Left lung (tissue), 14 donors: ENCODE measurements at regions of chr6 and their contacts with region 1.

Region 1: GRCh38 chr6:108541838-108542759 is 18.6 kb upstream of the FOXO3 start:
- DNase-seq: peak in 3 of 4 donors; percentile 67 to 88 (median 79)
- ATAC-seq: peak; percentile 97
- H3K4me3 ChIP-seq: no peak overlapping the region
- H3K27ac ChIP-seq: no peak overlapping the region
- H3K4me1 ChIP-seq: peaks cover 0 to 5% of the 10 kb centered on the region in 2 donors
- H3K27me3 ChIP-seq: no peaks in the 10 kb centered on the region
- CTCF ChIP-seq: peak; percentile 77

Region 2: DNA sequence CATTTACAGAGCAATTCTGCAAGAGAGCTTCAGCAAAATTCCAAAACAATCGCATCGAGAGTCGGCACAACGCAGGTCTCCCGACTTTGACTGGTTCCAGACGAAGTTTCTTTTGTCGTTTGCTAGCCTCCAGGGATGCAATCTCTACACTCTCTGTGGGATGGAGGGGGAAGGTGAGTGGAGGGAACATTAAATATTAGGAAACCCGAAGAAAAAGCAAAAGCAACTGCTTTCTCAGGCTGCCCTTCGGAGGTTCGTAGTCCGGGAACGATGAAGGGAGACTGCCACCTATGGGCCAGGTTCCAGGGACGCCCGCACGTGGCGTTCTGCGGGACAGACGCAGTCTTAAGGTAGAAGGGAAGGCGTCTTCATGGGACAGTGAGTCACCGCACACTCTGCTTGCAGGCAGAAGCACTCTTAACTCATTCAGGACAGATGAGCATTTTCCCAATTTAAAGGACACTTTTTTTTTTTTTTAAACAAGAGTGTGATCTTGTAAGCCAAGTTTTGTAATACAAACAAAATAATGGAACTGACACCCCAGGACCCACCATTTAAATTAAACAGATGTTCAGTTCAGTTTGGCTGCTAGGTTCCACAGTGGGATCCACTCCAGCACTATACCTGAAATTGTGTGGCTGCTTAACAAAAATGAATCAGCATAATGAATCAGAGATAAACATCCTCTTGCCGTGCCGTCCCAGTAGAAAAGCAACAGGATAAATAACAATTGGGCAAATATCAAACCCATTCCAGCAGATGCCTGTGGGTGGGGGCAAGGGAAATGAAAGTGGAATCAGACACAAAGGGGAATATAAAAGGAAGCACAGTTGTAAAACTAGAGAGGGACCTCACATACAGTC is 240.3 kb after region 1 on chr6:
- intact Hi-C with region 1: loop called in 1 of 2 experiments (anchors 5 kb)
- DNase-seq: peak; percentile 79 to 94 (median 88)
- ATAC-seq: peak; percentile 99
- H3K4me3 ChIP-seq: peak overlapping the region; percentile 37 to 39
- H3K27ac ChIP-seq: peak overlapping the region in 1 of 2 donors; percentile 57
- H3K4me1 ChIP-seq: peaks cover 0 to 18% of the 10 kb centered on the region in 2 donors
- H3K27me3 ChIP-seq: no peaks in the 10 kb centered on the region
- CTCF ChIP-seq: peak; percentile 61 to 78

Region 3: GRCh38 chr6:109073344-109074132 is 531.4 kb after region 1 on chr6:
- intact Hi-C with region 1: loop called (anchors 5 to 10 kb)
- DNase-seq: peak in 2 of 4 donors; percentile 73 to 87
- ATAC-seq: peak; percentile 88
- H3K4me3 ChIP-seq: no peak overlapping the region
- H3K27ac ChIP-seq: no peak overlapping the region
- H3K4me1 ChIP-seq: peaks cover 0 to 26% of the 10 kb centered on the region in 2 donors
- H3K27me3 ChIP-seq: no peaks in the 10 kb centered on the region
- CTCF ChIP-seq: peak; percentile 39 to 55